SK-N-SH (cell line): ENCODE measurements at regions of chr11 and their contacts with region 1.

Region 1: GRCh38 chr11:44621140-44621681 is 55.7 kb downstream of the CD82 start:
- DNase-seq: peak; percentile 92
- H3K4me3 ChIP-seq: peak overlapping the region in 1 of 2 experiments; percentile 26; a peak in 1 of 4 replicates
- H3K27ac ChIP-seq: no peak overlapping the region
- H3K4me1 ChIP-seq: peaks cover 0 to 28% of the 10 kb centered on the region in 2 experiments; a peak in 1 of 4 replicates
- H3K27me3 ChIP-seq: no peaks in the 10 kb centered on the region
- CTCF ChIP-seq: peak; percentile 94
- EP300 ChIP-seq: no peak
- RAD21 ChIP-seq: peak; percentile 98

Region 2: DNA sequence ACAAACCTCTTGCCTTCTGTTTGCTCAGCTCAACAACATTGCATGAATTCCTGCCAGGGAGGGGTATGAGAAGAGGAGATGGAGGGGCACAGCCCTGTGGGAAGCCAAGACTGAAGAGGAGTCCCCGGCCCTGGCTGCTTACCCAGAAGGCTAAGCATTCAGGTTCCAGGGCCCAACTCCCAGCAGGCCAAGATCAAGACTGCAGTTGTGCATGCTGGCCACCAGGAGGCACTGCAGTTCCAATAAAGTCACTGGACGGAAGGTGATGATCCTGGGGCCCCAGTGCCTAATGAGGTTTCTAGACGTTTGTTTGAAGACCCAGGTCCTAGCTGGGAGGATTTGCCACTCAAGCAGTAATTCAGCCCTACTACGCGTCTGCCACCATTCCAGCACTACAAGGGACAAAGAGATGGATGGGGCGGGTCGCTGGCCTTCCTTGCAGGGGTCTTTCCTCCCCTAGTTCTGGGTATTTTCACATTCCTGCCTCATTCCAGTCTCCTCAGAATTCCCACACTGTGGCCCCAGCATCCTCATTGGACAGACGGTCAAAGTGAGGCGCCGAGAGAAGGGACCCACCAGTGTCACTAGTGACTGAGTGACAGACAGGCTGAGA is 334.8 kb before region 1 on chr11:
- CTCF ChIA-PET with region 1: interaction called, 11 read pairs
- POLR2A ChIA-PET with region 1: no interaction called
- DNase-seq: peak; percentile 86
- H3K4me3 ChIP-seq: no peak overlapping the region
- H3K27ac ChIP-seq: no peak overlapping the region; a peak in 1 of 4 replicates
- H3K4me1 ChIP-seq: peaks cover 0 to 6% of the 10 kb centered on the region in 2 experiments; a peak in 2 of 4 replicates
- H3K27me3 ChIP-seq: no peaks in the 10 kb centered on the region
- CTCF ChIP-seq: peak; percentile 93
- EP300 ChIP-seq: no peak
- RAD21 ChIP-seq: peak; percentile 93

Region 3: GRCh38 chr11:44445500-44446365 is 175.5 kb before region 1 on chr11:
- CTCF ChIA-PET with region 1: no interaction called
- POLR2A ChIA-PET with region 1: no interaction called
- DNase-seq: no peak
- H3K4me3 ChIP-seq: no peak overlapping the region
- H3K27ac ChIP-seq: no peak overlapping the region
- H3K4me1 ChIP-seq: peaks cover 0 to 2% of the 10 kb centered on the region in 2 experiments; a peak in 1 of 4 replicates
- H3K27me3 ChIP-seq: no peaks in the 10 kb centered on the region
- CTCF ChIP-seq: no peak
- EP300 ChIP-seq: no peak
- RAD21 ChIP-seq: no peak

Region 4: GRCh38 chr11:44579302-44579761 is 41.9 kb before region 1 on chr11:
- CTCF ChIA-PET with region 1: interaction called, 20 read pairs
- POLR2A ChIA-PET with region 1: no interaction called
- DNase-seq: no peak
- H3K4me3 ChIP-seq: no peak overlapping the region
- H3K27ac ChIP-seq: no peak overlapping the region
- H3K4me1 ChIP-seq: peaks cover 10 to 21% of the 10 kb centered on the region in 2 experiments; a peak in 3 of 4 replicates
- H3K27me3 ChIP-seq: no peaks in the 10 kb centered on the region
- CTCF ChIP-seq: no peak
- EP300 ChIP-seq: no peak
- RAD21 ChIP-seq: no peak

Region 5: GRCh38 chr11:44600839-44601383 is 20.3 kb before region 1 on chr11:
- CTCF ChIA-PET with region 1: interaction called, 63 read pairs
- POLR2A ChIA-PET with region 1: no interaction called
- DNase-seq: no peak
- H3K4me3 ChIP-seq: no peak overlapping the region
- H3K27ac ChIP-seq: no peak overlapping the region
- H3K4me1 ChIP-seq: peaks cover 0 to 30% of the 10 kb centered on the region in 2 experiments; a peak in 1 of 4 replicates
- H3K27me3 ChIP-seq: no peaks in the 10 kb centered on the region
- CTCF ChIP-seq: no peak
- EP300 ChIP-seq: no peak
- RAD21 ChIP-seq: no peak

Region 6: DNA sequence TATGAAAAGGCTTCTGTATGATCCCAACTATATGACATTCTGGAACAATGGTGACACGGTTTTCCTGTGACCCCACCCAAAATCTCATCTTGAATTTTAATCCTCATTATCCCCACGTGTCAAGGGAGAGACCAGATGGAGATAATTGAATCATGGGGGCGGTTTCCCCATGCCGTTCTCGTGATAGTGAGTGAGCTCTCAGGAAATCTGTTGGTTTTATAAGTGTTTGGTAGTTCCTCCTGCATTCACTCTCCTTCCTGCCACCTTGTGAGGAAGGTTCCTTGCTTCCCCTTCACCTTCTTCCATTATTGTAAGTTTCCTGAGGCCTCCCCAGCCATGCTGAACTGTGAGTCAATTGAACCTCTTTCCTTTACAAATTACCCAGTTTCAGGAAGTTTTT is 52.5 kb after region 1 on chr11:
- CTCF ChIA-PET with region 1: no interaction called
- POLR2A ChIA-PET with region 1: no interaction called
- DNase-seq: no peak
- H3K4me3 ChIP-seq: no peak overlapping the region
- H3K27ac ChIP-seq: no peak overlapping the region
- H3K4me1 ChIP-seq: no peaks in the 10 kb centered on the region; a peak in 1 of 4 replicates
- H3K27me3 ChIP-seq: peaks cover 10% of the 10 kb centered on the region; the same call in 1 of the 2 replicates
- CTCF ChIP-seq: no peak
- EP300 ChIP-seq: no peak
- RAD21 ChIP-seq: no peak

Region 7: DNA sequence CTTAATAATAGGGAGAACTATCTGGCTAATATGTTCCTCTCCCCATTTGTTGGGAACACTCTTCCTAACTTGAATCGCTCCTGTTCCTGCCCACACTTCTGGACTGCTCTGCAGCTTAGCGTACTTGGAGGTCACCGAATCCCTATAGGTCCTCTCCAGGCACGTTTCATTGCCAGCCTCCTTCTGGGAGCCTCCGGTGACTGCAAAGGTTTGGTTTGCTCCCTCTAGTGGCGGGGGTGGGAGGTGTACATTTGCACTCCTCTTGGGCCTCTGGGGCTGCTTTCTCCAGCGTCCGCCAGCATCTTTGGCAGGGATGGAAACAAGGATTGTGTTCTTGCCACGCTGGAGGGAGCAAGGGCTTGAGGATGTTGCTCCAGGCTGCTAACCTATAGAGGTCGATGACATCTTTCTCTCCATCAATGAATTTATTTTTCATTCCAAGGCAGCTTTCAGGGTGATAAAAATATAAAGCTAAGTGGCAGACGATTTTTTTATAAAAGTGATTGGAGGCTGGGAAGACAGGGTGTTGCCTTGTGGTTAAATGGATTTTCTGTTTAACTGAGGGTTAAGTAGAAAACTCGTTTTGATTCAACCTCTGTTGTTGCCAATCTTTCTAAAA is 154.3 kb after region 1 on chr11:
- CTCF ChIA-PET with region 1: interaction called, 42 read pairs
- POLR2A ChIA-PET with region 1: no interaction called
- DNase-seq: peak; percentile 53
- H3K4me3 ChIP-seq: no peak overlapping the region
- H3K27ac ChIP-seq: peak overlapping the region in 1 of 2 experiments; percentile 99; a peak in 3 of 4 replicates
- H3K4me1 ChIP-seq: peaks cover 21 to 77% of the 10 kb centered on the region in 2 experiments; a peak in 3 of 4 replicates
- H3K27me3 ChIP-seq: no peaks in the 10 kb centered on the region
- CTCF ChIP-seq: peak; percentile 74
- EP300 ChIP-seq: no peak
- RAD21 ChIP-seq: peak; percentile 50

Region 8: DNA sequence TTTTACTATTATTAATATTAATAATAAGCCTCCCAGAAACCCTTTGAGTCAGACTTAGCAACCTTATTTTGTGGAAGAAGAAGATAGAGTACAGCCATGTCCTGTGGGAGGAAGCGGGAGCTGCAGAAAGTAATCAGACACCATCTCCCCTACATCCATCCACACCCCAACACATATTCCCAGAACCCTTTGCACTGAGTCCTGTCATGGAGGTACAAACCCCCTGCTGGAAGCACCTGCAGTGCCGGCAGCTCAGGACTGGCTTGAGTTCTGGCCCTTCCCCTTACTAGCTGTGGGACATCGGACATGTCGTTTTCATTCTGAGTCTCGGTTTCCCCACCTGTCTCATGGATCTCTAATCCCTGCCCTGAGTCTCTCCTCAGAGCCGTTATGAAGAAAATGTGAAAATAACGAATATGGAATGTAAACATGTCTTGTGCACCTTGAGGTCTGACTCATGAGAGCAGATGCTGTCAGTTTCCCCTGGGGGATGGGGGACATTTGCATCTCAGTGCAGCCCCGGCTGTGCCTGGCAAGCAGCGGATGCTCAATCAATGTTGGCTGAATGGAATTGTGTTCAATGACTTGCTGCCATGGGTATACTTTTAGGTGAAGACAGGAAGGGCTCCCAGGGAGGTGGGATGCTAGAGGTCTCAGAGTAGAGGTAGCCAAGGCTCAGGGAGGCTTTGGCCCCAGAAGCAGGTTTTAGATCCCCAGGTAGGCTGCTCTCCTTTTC is 284.1 kb after region 1 on chr11:
- CTCF ChIA-PET with region 1: interaction called, 155 read pairs
- POLR2A ChIA-PET with region 1: no interaction called
- DNase-seq: no peak
- H3K4me3 ChIP-seq: no peak overlapping the region
- H3K27ac ChIP-seq: no peak overlapping the region
- H3K4me1 ChIP-seq: peaks cover 0 to 8% of the 10 kb centered on the region in 2 experiments; a peak in 1 of 4 replicates
- H3K27me3 ChIP-seq: peaks cover 5% of the 10 kb centered on the region; the same call in 1 of the 2 replicates
- CTCF ChIP-seq: no peak
- EP300 ChIP-seq: no peak
- RAD21 ChIP-seq: no peak

Region 9: DNA sequence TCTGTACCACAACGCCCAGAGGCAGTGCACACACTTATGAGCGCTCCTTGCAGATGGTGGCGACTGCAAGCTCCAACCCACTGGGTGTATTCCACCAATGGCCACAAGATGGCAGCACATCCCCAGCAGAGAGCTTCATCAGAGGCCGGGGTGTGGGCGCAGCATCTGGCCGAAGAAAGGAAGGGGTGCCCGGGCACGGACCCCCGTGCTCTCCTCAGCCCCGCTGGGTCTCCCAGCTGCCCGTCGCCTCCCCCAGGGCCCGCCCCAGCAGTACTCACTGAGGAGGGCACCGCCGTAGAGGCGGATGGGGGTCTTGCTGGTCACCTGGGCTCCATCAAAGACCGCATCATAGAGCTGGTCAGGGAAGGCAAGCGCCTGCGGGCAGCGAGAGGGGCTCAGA is 315.3 kb after region 1 on chr11:
- CTCF ChIA-PET with region 1: interaction called, 23 read pairs
- POLR2A ChIA-PET with region 1: no interaction called
- DNase-seq: peak; percentile 91
- H3K4me3 ChIP-seq: peak overlapping the region in 1 of 2 experiments; percentile 44; a peak in 1 of 4 replicates
- H3K27ac ChIP-seq: no peak overlapping the region
- H3K4me1 ChIP-seq: peaks cover 0 to 6% of the 10 kb centered on the region in 2 experiments; a peak in 1 of 4 replicates
- H3K27me3 ChIP-seq: no peaks in the 10 kb centered on the region
- CTCF ChIP-seq: peak; percentile 89
- EP300 ChIP-seq: no peak
- RAD21 ChIP-seq: peak; percentile 95